AG04450 (cell line): ENCODE measurements at regions of chr3 and their contacts with region 1.

Region 1: GRCh38 chr3:120567370-120568201 is 28.6 kb upstream of the NDUFB4 start:
- DNase-seq: no peak
- H3K4me3 ChIP-seq: peak overlapping the region; percentile 0; the same call in 1 of the 2 replicates
- H3K27ac ChIP-seq: no peak overlapping the region
- H3K27me3 ChIP-seq: no peaks in the 10 kb centered on the region
- CTCF ChIP-seq: peak; percentile 45

Region 2: GRCh38 chr3:120245386-120245785 is 322.2 kb before region 1 on chr3:
- CTCF ChIA-PET with region 1: interaction called, 14 read pairs
- POLR2A ChIA-PET with region 1: no interaction called
- DNase-seq: no peak
- H3K4me3 ChIP-seq: no peak overlapping the region
- H3K27ac ChIP-seq: no peak overlapping the region
- H3K27me3 ChIP-seq: no peaks in the 10 kb centered on the region
- CTCF ChIP-seq: no peak

Region 3: GRCh38 chr3:120263792-120264191 is 303.8 kb before region 1 on chr3:
- CTCF ChIA-PET with region 1: no interaction called
- POLR2A ChIA-PET with region 1: no interaction called
- DNase-seq: no peak
- H3K4me3 ChIP-seq: no peak overlapping the region
- H3K27ac ChIP-seq: no peak overlapping the region
- H3K27me3 ChIP-seq: peaks cover 3% of the 10 kb centered on the region
- CTCF ChIP-seq: no peak

Region 4: GRCh38 chr3:120596116-120596852 is 28.7 kb after region 1 on chr3 and contains the start of gene NDUFB4:
- CTCF ChIA-PET with region 1: interaction called, 27 read pairs
- POLR2A ChIA-PET with region 1: interaction called, 6 read pairs
- DNase-seq: peak; percentile 98
- H3K4me3 ChIP-seq: peak within 1 kb of the TSS; percentile 85
- H3K27ac ChIP-seq: peak within 1 kb of the TSS; percentile 88
- H3K27me3 ChIP-seq: no peaks in the 10 kb centered on the region
- CTCF ChIP-seq: no peak
- polyA plus RNA-seq, gene NDUFB4: 174 and 183 TPM in 2 replicates

Region 5: GRCh38 chr3:120742198-120742849 is 174.7 kb after region 1 on chr3 and contains the starts of genes GTF2E1 and RABL3:
- CTCF ChIA-PET with region 1: interaction called, 12 read pairs
- POLR2A ChIA-PET with region 1: no interaction called
- DNase-seq: peak; percentile 99
- H3K4me3 ChIP-seq: peak within 1 kb of the TSS; percentile 98
- H3K27ac ChIP-seq: peak within 1 kb of the TSS; percentile 97
- H3K27me3 ChIP-seq: no peaks in the 10 kb centered on the region
- CTCF ChIP-seq: no peak
- polyA plus RNA-seq, gene GTF2E1: 12.8 and 15.5 TPM in 2 replicates
- polyA plus RNA-seq, gene RABL3: 7.9 and 9.3 TPM in 2 replicates

Region 6: DNA sequence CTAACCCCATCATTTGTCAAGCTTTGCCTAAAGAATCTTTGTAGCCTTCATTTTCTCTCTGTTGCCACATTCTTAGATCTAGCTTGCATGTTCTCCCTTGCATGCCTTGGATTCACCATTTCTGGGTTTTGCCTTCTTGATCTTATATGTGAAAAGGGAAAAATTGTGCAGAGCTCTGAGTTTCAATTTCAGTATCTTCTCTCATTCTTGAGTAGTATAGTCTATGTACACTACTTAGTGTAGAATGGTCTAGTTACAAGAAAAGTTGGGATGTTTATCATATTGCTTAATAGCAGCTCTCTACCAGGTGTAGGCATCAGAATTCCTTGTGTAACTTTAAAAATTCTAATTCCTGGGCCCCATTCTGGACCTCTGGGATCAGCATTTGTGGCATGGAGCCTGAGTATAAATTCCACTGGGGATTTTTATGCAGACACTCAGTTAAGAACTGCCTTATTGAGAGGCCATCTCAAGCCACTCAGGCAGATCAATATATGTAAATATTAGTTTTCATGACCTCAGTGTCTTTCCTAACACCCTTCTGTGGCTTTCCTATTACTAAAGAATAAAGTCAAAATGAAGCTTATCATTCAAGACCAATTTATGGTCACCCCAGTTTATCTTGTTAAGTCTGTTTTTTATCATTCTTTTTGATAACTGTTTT is 198.4 kb after region 1 on chr3:
- CTCF ChIA-PET with region 1: interaction called, 11 read pairs
- POLR2A ChIA-PET with region 1: no interaction called
- DNase-seq: no peak
- H3K4me3 ChIP-seq: no peak overlapping the region
- H3K27ac ChIP-seq: no peak overlapping the region
- H3K27me3 ChIP-seq: no peaks in the 10 kb centered on the region
- CTCF ChIP-seq: no peak

Region 7: DNA sequence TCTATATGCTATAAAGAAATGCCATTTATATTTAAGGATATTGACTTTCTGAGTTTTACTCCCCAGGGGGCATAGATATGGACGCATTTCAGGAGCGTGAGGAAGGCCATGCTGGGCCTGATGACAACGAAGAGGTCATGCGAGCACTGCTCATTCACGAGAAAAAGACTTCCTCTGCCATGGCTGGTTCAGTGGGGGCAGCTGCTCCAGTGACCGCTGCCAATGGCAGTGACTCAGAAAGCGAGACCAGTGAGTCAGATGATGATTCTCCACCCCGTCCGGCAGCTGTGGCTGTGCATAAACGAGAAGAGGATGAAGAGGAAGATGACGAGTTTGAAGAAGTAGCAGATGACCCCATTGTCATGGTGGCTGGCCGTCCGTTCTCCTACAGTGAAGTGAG is 213.4 kb after region 1 on chr3:
- CTCF ChIA-PET with region 1: interaction called, 16 read pairs
- POLR2A ChIA-PET with region 1: interaction called, 3 read pairs
- DNase-seq: peak; percentile 44
- H3K4me3 ChIP-seq: no peak overlapping the region; the same call in 1 of the 2 replicates
- H3K27ac ChIP-seq: peak overlapping the region; percentile 54
- H3K27me3 ChIP-seq: no peaks in the 10 kb centered on the region
- CTCF ChIP-seq: no peak